ENCODE measurements at regions of chr2 and their contacts with region 1.

Region 1: GRCh38 chr2:239934571-239935171 is 90.5 kb downstream of the NDUFA10 start:
- DNase-seq: peak; percentile 51 to 78 (median 69)
- ATAC-seq: peak; percentile 51 to 81 (median 73)
- H3K4me3 ChIP-seq: no peak overlapping the region
- H3K27ac ChIP-seq: no peak overlapping the region
- H3K4me1 ChIP-seq: peaks cover 0 to 7% (median 0%) of the 10 kb centered on the region in 12 donors
- H3K27me3 ChIP-seq: no peaks in the 10 kb centered on the region
- CTCF ChIP-seq: peak; percentile 58 to 86 (median 72)
- POLR2A ChIP-seq: no peak

Region 2: GRCh38 chr2:239728211-239728600 is 206.5 kb before region 1 on chr2:
- intact Hi-C with region 1: no loop called
- DNase-seq: peak; percentile 24 to 68 (median 47)
- ATAC-seq: peak in 2 of 4 donors; percentile 18 to 44
- H3K4me3 ChIP-seq: no peak overlapping the region
- H3K27ac ChIP-seq: no peak overlapping the region
- H3K4me1 ChIP-seq: no peaks in the 10 kb centered on the region
- H3K27me3 ChIP-seq: peaks cover 0 to 12% (median 0%) of the 10 kb centered on the region in 9 donors
- CTCF ChIP-seq: no peak
- POLR2A ChIP-seq: no peak

Region 3: GRCh38 chr2:239979243-239980023 is 44.8 kb after region 1 on chr2:
- intact Hi-C with region 1: loop called in 1 of 10 experiments (anchors 5 kb)
- DNase-seq: no peak
- ATAC-seq: peak in 3 of 4 donors; percentile 48 to 73 (median 64)
- H3K4me3 ChIP-seq: no peak overlapping the region
- H3K27ac ChIP-seq: no peak overlapping the region
- H3K4me1 ChIP-seq: peaks cover 0 to 8% (median 0%) of the 10 kb centered on the region in 12 donors
- H3K27me3 ChIP-seq: no peaks in the 10 kb centered on the region
- CTCF ChIP-seq: peak in 5 of 12 donors; percentile 7 to 32 (median 26)
- POLR2A ChIP-seq: no peak

Region 4: DNA sequence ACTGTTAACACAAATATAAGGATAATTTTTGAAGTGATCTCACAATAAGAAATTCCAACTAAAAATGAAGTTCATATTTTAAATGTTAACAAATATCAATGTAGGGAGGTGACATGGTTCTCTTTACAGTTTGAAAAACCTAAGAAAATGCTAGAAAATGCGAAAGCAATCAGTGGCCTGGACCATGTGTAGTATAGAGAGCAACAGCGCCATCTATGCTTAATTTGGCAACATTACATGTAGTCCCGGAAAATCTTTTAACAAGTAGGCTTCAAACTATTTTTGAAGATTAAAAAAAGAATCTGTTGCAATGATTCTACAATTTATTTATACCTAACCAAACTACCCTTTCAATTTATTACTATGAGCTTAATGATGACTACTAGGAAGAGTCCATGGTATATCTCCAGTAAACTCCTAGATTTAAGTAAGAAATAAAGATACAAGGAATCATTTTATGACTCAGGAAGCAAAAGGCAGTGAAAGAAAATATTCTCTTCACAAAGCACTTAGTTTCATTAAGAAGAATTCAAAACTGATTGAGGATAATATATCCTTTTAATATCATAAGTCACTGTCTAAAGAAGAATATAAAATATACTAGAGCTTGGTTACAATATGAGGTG is 57.1 kb after region 1 on chr2:
- intact Hi-C with region 1: loop called in 6 of 10 experiments (anchors 1 to 10 kb)
- DNase-seq: no peak
- ATAC-seq: peak in 1 of 4 donors; percentile 69
- H3K4me3 ChIP-seq: no peak overlapping the region
- H3K27ac ChIP-seq: no peak overlapping the region
- H3K4me1 ChIP-seq: peaks cover 0 to 3% (median 0%) of the 10 kb centered on the region in 12 donors
- H3K27me3 ChIP-seq: no peaks in the 10 kb centered on the region
- CTCF ChIP-seq: peak; percentile 73 to 91 (median 85)
- POLR2A ChIP-seq: no peak

Region 5: DNA sequence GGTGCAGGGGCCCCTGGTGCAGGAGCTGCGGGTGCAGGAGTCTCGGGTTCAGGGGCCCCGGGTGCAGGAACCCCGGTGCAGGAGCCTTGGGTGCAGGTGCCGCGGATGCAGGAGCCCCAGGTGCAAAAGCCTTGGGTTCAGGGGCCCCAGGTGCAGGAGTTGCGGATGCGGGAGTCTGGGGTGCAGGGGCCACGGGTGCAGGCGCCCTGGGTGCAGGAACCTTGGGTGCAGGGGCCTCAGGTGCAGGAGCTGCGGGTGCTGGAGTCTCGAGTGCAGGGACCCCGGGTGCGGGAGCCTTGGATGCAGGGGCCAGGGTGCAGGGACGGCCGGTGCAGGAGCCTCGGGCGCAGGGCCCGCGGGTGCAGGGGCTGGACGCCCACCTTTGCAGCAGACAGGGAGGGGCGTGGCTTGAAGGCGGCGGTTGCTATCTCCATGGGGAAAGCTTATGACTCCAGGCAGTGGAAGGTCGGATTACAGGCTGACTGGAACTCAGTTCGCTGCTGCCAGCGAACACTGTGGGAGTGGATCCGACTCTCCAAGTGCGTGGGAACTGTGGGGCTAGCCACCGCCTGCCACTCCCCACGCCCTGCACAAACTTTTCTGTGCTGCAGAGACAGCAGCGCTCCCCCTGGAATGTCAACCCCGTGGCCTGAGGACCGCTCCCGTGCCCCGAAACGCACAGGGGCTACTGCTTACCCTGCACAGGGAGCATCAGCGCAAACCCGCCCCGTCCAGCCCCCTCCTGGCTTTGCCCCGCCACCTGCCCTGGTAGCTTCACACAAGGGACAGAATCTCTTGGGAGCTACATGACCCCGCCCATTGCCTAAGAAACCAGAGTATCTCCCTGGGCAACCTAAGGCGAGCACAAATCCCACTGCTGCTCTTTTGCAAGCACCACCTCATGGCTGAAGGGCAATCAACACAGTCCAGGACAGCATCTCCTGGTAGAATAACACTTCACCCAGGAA is 161.2 kb after region 1 on chr2:
- intact Hi-C with region 1: no loop called
- DNase-seq: no peak
- ATAC-seq: no peak
- H3K4me3 ChIP-seq: no peak overlapping the region
- H3K27ac ChIP-seq: no peak overlapping the region
- H3K4me1 ChIP-seq: no peaks in the 10 kb centered on the region
- H3K27me3 ChIP-seq: peaks cover 15 to 67% (median 35%) of the 10 kb centered on the region in 9 donors
- CTCF ChIP-seq: no peak
- POLR2A ChIP-seq: no peak

Region 6: DNA sequence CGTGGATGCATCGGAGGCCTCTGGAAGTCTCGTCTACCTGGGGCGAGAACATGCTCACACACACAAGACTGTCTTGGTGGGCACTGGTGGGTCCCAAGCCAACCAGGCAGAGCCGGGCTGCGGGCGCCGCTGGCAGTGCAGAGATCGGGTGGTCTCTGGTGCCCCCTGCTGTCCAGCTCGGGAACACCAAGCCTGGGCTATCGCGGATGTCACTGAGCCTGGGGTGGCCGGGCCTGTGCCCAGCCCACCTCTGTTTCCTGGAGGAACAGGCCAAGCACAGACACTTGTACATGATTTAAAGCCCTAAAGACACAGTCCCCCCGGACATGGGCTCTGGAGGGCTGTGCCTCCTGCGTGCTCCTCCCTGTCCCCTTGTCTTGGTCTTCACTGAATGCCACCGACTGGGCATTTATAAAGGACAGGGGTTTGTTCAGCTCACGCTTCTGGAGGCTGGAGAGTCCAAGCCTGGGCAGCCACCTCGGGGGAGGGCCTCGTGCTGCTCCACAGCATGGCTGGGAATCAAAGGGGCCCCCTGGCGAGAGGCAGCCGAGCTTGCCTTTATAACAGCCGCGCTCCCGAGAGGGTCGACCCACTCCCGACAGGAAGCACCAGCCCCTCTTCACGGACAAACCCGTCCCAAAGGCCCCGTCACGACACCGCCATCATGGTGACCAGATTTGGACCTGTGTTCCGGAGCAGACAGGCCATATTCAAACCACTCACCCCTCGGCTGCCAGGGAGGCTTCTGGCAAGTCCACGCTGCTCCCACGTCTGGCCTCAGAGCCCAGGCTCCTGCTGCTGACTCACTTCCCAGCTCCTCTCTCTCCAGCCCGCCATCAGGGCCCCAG is 209.4 kb after region 1 on chr2:
- intact Hi-C with region 1: loop called in 1 of 10 experiments (anchors 10 kb)
- DNase-seq: peak; percentile 50 to 83 (median 64)
- ATAC-seq: peak; percentile 28 to 81 (median 80)
- H3K4me3 ChIP-seq: no peak overlapping the region
- H3K27ac ChIP-seq: no peak overlapping the region
- H3K4me1 ChIP-seq: peaks cover 0 to 6% (median 0%) of the 10 kb centered on the region in 12 donors
- H3K27me3 ChIP-seq: peaks cover 0 to 20% (median 5%) of the 10 kb centered on the region in 9 donors
- CTCF ChIP-seq: peak; percentile 4 to 96 (median 93)
- POLR2A ChIP-seq: no peak